Activated CD4-positive, alpha-beta T cell treated with anti-CD3 and anti-CD28 coated beads for 36 hours (primary cell): ENCODE measurements at regions of chr2 and their contacts with region 1.

Region 1: DNA sequence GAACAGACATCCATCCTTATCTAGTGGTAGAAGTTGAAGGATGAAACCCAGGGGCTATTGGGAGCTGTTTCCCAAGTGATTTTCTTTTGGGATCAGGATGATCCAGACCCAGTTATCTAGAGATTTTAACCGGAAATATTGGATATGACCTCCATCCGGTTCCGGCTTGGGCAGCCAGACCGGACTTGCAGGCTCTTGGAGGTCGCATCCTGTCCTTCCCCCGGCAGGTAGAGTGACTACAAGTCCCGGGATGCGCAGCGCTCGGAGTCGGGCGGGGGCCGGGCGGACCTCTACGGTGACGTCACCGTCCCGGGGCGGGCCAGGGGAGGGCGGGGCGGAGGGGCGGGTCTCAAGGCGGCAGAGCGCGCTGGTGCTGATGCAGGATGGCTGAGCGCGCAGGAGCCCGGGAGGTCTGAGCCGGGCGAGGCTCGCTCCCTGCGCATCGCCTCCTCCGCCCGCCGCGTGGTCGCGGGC is at the start of gene KIF5C:
- DNase-seq: peak; percentile 97
- ATAC-seq: peak; percentile 86
- H3K4me3 Mint-ChIP-seq: peak within 1 kb of the TSS; percentile 82
- H3K27ac Mint-ChIP-seq: peak within 1 kb of the TSS; percentile 73
- H3K4me1 Mint-ChIP-seq: peaks cover 7% of the 10 kb centered on the region
- H3K27me3 Mint-ChIP-seq: peaks cover 16% of the 10 kb centered on the region
- total RNA-seq, gene KIF5C: 13.5 to 14.1 TPM

Region 2: GRCh38 chr2:147490401-147491261 is 1384.3 kb before region 1 on chr2:
- CTCF ChIA-PET with region 1: no interaction called
- POLR2A ChIA-PET with region 1: no interaction called
- intact Hi-C with region 1: no loop called
- DNase-seq: no peak
- ATAC-seq: peak; percentile 39
- H3K4me3 Mint-ChIP-seq: no peak overlapping the region
- H3K27ac Mint-ChIP-seq: no peak overlapping the region
- H3K4me1 Mint-ChIP-seq: peaks cover 22% of the 10 kb centered on the region
- H3K27me3 Mint-ChIP-seq: no peaks in the 10 kb centered on the region

Region 3: GRCh38 chr2:147843864-147844696 is 1030.8 kb before region 1 on chr2:
- CTCF ChIA-PET with region 1: no interaction called
- POLR2A ChIA-PET with region 1: no interaction called
- intact Hi-C with region 1: loop called in 1 of 2 experiments (anchors 5 kb)
- DNase-seq: peak; percentile 93
- ATAC-seq: peak; percentile 82
- H3K4me3 Mint-ChIP-seq: peak overlapping the region; percentile 82
- H3K27ac Mint-ChIP-seq: peak overlapping the region; percentile 77
- H3K4me1 Mint-ChIP-seq: peaks cover 34% of the 10 kb centered on the region
- H3K27me3 Mint-ChIP-seq: peaks cover 14% of the 10 kb centered on the region

Region 4: GRCh38 chr2:148603562-148603920 is 271.4 kb before region 1 on chr2:
- CTCF ChIA-PET with region 1: no interaction called
- POLR2A ChIA-PET with region 1: no interaction called
- intact Hi-C with region 1: loop called in 1 of 2 experiments (anchors 1 kb)
- DNase-seq: peak; percentile 49
- ATAC-seq: peak; percentile 92
- H3K4me3 Mint-ChIP-seq: no peak overlapping the region
- H3K27ac Mint-ChIP-seq: peak overlapping the region; percentile 88
- H3K4me1 Mint-ChIP-seq: peaks cover 18% of the 10 kb centered on the region
- H3K27me3 Mint-ChIP-seq: peaks cover 17% of the 10 kb centered on the region

Region 5: DNA sequence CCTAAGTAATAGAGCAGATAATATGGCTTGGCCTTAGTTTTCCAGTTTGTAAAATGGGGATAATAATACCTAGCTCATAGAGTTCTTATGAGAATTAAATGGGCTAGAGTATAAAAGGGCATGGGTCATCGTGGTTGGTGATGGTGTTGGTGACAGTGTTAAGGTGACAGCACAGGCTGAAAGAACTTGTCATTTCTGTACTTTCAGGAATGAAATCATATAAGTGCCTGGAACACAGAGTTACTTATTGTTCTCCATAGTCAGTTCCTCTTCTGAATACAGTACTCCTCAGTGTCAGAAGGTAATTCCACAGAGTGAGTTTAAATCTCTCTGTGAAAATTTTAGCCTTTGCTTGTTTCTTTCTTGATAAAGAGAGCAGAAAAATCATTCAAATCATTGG is 42.5 kb after region 1 on chr2:
- CTCF ChIA-PET with region 1: no interaction called
- POLR2A ChIA-PET with region 1: no interaction called
- intact Hi-C with region 1: loop called in 1 of 2 experiments (anchors 2 kb)
- DNase-seq: peak; percentile 50
- ATAC-seq: peak; percentile 97
- H3K4me3 Mint-ChIP-seq: no peak overlapping the region
- H3K27ac Mint-ChIP-seq: no peak overlapping the region
- H3K4me1 Mint-ChIP-seq: peaks cover 9% of the 10 kb centered on the region
- H3K27me3 Mint-ChIP-seq: no peaks in the 10 kb centered on the region

Region 6: GRCh38 chr2:149587220-149587949 is 712.5 kb after region 1 on chr2 and contains the start of gene MMADHC:
- CTCF ChIA-PET with region 1: no interaction called
- POLR2A ChIA-PET with region 1: no interaction called
- intact Hi-C with region 1: loop called in 1 of 2 experiments (anchors 2 kb)
- DNase-seq: peak; percentile 96
- ATAC-seq: peak; percentile 99
- H3K4me3 Mint-ChIP-seq: peak within 1 kb of the TSS; percentile 92
- H3K27ac Mint-ChIP-seq: peak within 1 kb of the TSS; percentile 99
- H3K4me1 Mint-ChIP-seq: peaks cover 41% of the 10 kb centered on the region
- H3K27me3 Mint-ChIP-seq: peaks cover 12% of the 10 kb centered on the region
- total RNA-seq, gene MMADHC: 94.7 to 136 TPM